Posterior vena cava (tissue), 2 donors: ENCODE measurements at regions of chr10 and their contacts with region 1.

Region 1: GRCh38 chr10:122551450-122551849 is 9.1 kb upstream of the DMBT1 start:
- DNase-seq: no peak

Region 2: DNA sequence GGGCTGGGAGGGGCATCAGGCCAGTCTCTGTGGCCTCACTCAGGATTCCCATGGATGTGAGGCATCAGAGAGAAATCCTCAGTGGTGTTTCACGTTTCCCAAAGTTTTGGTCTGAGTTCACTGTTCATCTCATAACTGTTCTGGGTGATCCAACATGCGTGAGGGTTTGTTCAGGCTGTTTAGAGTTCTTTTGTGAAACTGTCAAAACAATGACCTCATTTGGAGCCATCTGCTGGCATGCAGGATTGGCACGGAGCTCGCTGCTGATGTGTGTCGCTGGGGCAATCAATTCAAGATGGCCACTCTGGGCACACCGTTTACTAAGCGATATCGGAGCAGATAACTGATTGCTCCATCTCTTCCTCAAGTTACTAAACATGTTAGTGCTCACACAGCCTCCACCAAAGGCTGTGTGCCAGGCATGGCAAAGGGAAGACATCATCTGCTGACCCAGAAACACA is 1334.7 kb before region 1 on chr10:
- intact Hi-C with region 1: no loop called
- DNase-seq: no peak

Region 3: GRCh38 chr10:122446668-122447423 is 104.6 kb before region 1 on chr10:
- intact Hi-C with region 1: loop called in 1 of 2 experiments (anchors 10 kb)
- DNase-seq: no peak